Common myeloid progenitor, CD34-positive (primary cell): ENCODE measurements at regions of chr18 and their contacts with region 1.

Region 1: GRCh38 chr18:8478166-8478967 is 130.9 kb upstream of the RAB12 start:
- DNase-seq: peak; percentile 31 to 63 (median 47)
- H3K4me3 ChIP-seq: no peak overlapping the region
- H3K27ac ChIP-seq: no peak overlapping the region
- H3K4me1 ChIP-seq: no peaks in the 10 kb centered on the region
- H3K27me3 ChIP-seq: peaks cover 0 to 9% (median 0%) of the 10 kb centered on the region in 5 experiments

Region 2: GRCh38 chr18:8489761-8490160 is 11.4 kb after region 1 on chr18:
- CTCF ChIA-PET with region 1: interaction called, 11 read pairs
- POLR2A ChIA-PET with region 1: no interaction called
- DNase-seq: no peak
- H3K4me3 ChIP-seq: no peak overlapping the region
- H3K27ac ChIP-seq: no peak overlapping the region
- H3K4me1 ChIP-seq: peaks cover 0 to 3% (median 1%) of the 10 kb centered on the region in 4 experiments
- H3K27me3 ChIP-seq: no peaks in the 10 kb centered on the region